ENCODE measurements at regions of chr13 and their contacts with region 1.

Region 1: DNA sequence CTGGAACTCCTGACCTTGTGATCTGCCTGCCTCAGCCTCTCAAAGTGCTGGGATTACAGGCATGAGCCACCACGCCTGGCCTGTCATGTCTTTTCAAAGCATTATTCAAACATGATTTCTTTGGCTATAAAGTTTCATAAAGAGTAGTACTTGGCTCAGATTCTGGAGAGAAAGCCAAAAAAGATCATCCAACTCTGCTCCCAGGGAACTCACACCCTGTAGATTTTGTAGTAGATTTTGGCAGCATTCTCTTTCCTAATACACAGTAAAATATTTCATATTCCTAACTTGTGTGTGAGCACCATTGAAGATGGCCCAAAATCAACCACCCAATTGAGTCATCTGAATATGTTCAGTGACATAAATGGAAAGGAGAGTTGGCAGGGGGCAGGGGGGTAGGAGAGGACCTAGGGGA is 48.4 kb downstream of the CAB39L start:
- DNase-seq: peak in 1 of 2 donors; percentile 63
- ATAC-seq: peak; percentile 82
- H3K4me3 ChIP-seq: no peak overlapping the region
- H3K27ac ChIP-seq: peak overlapping the region in 1 of 2 donors; percentile 36
- H3K4me1 ChIP-seq: peaks cover 0 to 1% of the 10 kb centered on the region in 2 donors
- H3K27me3 ChIP-seq: no peaks in the 10 kb centered on the region

Region 2: DNA sequence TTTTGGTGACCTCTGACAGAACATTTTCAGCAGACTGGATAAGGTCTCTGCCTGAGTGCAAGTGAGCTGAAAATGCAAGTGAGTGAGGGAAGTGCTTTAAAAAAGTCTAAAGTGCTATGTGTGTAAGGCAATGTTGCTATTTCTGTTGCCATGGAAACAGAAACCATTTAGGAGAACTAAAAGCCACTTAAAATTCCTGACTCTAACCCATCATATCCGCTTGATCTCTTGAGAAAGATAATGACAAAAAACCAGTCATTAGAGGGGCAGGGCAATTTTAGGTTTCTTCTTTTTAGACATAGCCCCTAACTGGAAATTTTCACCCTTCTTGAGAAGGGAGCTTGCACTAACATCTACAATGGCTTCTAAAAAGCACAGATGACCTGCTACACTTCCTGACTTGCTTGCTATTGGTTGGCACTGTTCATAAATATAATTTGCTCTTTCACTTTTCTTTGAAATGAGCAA is 742.0 kb before region 1 on chr13 and contains the start of gene CYSLTR2:
- intact Hi-C with region 1: no loop called
- DNase-seq: no peak
- ATAC-seq: peak; percentile 58
- H3K4me3 ChIP-seq: no peak within 1 kb of the TSS
- H3K27ac ChIP-seq: no peak within 1 kb of the TSS
- H3K4me1 ChIP-seq: no peaks in the 10 kb centered on the region
- H3K27me3 ChIP-seq: no peaks in the 10 kb centered on the region
- total RNA-seq, gene CYSLTR2: 1.1 TPM

Region 3: GRCh38 chr13:49308089-49308875 is 87.2 kb before region 1 on chr13:
- intact Hi-C with region 1: loop called in 1 of 2 experiments (anchors 5 kb)
- DNase-seq: peak; percentile 88 to 90
- ATAC-seq: peak; percentile 91
- H3K4me3 ChIP-seq: no peak overlapping the region
- H3K27ac ChIP-seq: peak overlapping the region; percentile 75 to 80
- H3K4me1 ChIP-seq: peaks cover 0 to 2% of the 10 kb centered on the region in 2 donors
- H3K27me3 ChIP-seq: no peaks in the 10 kb centered on the region

Region 4: GRCh38 chr13:49329821-49330220 is 65.6 kb before region 1 on chr13:
- intact Hi-C with region 1: loop called in 1 of 2 experiments (anchors 2 kb)
- DNase-seq: no peak
- ATAC-seq: no peak
- H3K4me3 ChIP-seq: no peak overlapping the region
- H3K27ac ChIP-seq: peak overlapping the region in 1 of 2 donors; percentile 17
- H3K4me1 ChIP-seq: no peaks in the 10 kb centered on the region
- H3K27me3 ChIP-seq: no peaks in the 10 kb centered on the region

Region 5: GRCh38 chr13:49356223-49356622 is 39.2 kb before region 1 on chr13:
- intact Hi-C with region 1: loop called (anchors 2 to 5 kb)
- DNase-seq: no peak
- ATAC-seq: peak; percentile 90
- H3K4me3 ChIP-seq: no peak overlapping the region
- H3K27ac ChIP-seq: peak overlapping the region in 1 of 2 donors; percentile 82
- H3K4me1 ChIP-seq: peaks cover 4 to 5% of the 10 kb centered on the region in 2 donors
- H3K27me3 ChIP-seq: no peaks in the 10 kb centered on the region

Region 6: GRCh38 chr13:49436890-49437289 is 41.4 kb after region 1 on chr13:
- intact Hi-C with region 1: loop called in 1 of 2 experiments (anchors 5 kb)
- DNase-seq: peak; percentile 70 to 76
- ATAC-seq: peak; percentile 85
- H3K4me3 ChIP-seq: no peak overlapping the region
- H3K27ac ChIP-seq: no peak overlapping the region
- H3K4me1 ChIP-seq: no peaks in the 10 kb centered on the region
- H3K27me3 ChIP-seq: no peaks in the 10 kb centered on the region